Ascending aorta (tissue), 2 donors: ENCODE measurements at regions of chr11 and their contacts with region 1.

Region 1: GRCh38 chr11:62612366-62613290 is at the starts of genes EML3 and ROM1:
- DNase-seq: peak; percentile 81 to 97
- H3K4me3 ChIP-seq: peak within 1 kb of the TSS; percentile 82 to 92
- H3K27ac ChIP-seq: peak within 1 kb of the TSS; percentile 98 to 99
- H3K4me1 ChIP-seq: peaks cover 11 to 27% of the 10 kb centered on the region in 2 donors
- H3K27me3 ChIP-seq: no peaks in the 10 kb centered on the region
- CTCF ChIP-seq: peak; percentile 73 to 95 (median 87)
- total RNA-seq, gene EML3: 207 TPM
- total RNA-seq, gene ROM1: not detected

Region 2: DNA sequence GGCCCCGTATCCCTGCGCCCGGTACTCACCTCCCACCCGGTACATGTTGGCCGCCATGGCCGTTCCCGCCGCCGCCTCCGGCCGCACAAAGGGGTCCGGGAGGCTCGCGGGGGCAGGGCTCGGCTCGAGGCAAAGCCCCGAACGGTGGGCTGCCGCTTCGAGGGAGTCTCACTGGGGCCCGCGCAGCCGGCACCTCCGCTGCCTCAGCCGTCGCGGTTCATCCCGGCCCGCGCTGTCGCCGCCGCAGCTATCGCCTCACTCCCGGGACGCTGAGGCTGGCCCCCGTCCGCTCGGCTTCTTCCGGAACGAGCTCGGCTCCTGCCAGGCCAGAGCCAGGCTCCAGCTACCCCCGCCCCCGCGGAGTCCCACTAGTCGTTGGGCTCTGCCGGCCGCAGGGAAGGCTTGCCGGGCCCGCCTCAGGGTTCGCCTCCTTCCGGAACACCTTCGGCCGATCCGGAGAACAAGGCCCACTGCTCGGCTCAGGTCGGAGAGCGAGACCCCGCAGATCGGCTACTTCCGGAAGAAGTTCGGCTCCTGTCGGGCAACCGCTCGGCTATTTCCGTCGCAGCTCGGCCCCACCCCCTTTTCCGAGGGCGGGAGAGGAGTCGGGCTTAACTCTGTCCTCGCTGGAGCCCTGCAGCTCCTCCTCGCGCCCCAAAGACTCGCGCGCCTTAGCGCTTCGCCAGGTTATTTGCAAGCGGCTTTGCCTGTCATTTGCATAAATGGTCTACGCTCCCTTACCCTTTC is 11.1 kb before region 1 on chr11 and contains the start of gene MTA2:
- intact Hi-C with region 1: loop called (anchors 1 kb)
- DNase-seq: peak; percentile 89 to 98
- H3K4me3 ChIP-seq: peak within 1 kb of the TSS; percentile 87 to 98
- H3K27ac ChIP-seq: peak within 1 kb of the TSS; percentile 96 to 97
- H3K4me1 ChIP-seq: peaks cover 8 to 20% of the 10 kb centered on the region in 2 donors
- H3K27me3 ChIP-seq: no peaks in the 10 kb centered on the region
- CTCF ChIP-seq: no peak
- total RNA-seq, gene MTA2: 79.2 TPM

Region 3: GRCh38 chr11:62652161-62653006 is 39.8 kb after region 1 on chr11:
- intact Hi-C with region 1: loop called (anchors 2 kb)
- DNase-seq: no peak
- H3K4me3 ChIP-seq: peak overlapping the region; percentile 78 to 96
- H3K27ac ChIP-seq: peak overlapping the region; percentile 93 to 94
- H3K4me1 ChIP-seq: peaks cover 0 to 15% of the 10 kb centered on the region in 2 donors
- H3K27me3 ChIP-seq: no peaks in the 10 kb centered on the region
- CTCF ChIP-seq: no peak

Region 4: DNA sequence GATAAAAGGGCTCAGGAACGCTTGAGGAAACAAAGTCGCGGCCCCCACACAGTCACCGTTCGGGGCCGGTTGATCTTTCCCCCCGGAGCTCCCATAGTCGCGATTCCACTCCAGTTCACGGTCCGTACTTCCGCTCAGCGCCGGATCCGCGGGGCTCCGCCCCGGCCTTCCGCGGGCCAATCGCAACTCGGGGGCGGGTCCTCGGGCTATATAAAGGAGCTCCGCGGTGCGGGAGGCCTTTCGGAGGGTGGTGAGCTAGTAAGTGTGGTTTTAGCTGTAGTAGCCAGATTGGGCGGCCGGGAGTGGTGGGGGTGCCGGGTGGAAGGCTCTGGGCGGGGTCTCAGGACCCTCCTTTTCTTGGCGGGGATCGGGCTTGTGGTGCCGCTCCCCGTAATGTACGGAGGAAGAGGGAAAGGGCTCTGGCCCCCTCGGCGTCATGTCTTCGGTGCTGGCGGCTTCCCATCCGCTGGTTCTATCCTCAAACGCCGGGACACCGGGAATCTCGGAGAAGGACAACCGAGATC is 52.5 kb after region 1 on chr11 and contains the starts of genes C11orf98 and CSKMT:
- intact Hi-C with region 1: loop called (anchors 2 kb)
- DNase-seq: peak; percentile 82 to 96
- H3K4me3 ChIP-seq: peak within 1 kb of the TSS; percentile 71 to 93
- H3K27ac ChIP-seq: peak within 1 kb of the TSS; percentile 80 to 89
- H3K4me1 ChIP-seq: peaks cover 10 to 20% of the 10 kb centered on the region in 2 donors
- H3K27me3 ChIP-seq: no peaks in the 10 kb centered on the region
- CTCF ChIP-seq: peak in 1 of 3 experiments; percentile 4
- total RNA-seq, gene C11orf98: 49.8 TPM
- total RNA-seq, gene CSKMT: not detected

Region 5: DNA sequence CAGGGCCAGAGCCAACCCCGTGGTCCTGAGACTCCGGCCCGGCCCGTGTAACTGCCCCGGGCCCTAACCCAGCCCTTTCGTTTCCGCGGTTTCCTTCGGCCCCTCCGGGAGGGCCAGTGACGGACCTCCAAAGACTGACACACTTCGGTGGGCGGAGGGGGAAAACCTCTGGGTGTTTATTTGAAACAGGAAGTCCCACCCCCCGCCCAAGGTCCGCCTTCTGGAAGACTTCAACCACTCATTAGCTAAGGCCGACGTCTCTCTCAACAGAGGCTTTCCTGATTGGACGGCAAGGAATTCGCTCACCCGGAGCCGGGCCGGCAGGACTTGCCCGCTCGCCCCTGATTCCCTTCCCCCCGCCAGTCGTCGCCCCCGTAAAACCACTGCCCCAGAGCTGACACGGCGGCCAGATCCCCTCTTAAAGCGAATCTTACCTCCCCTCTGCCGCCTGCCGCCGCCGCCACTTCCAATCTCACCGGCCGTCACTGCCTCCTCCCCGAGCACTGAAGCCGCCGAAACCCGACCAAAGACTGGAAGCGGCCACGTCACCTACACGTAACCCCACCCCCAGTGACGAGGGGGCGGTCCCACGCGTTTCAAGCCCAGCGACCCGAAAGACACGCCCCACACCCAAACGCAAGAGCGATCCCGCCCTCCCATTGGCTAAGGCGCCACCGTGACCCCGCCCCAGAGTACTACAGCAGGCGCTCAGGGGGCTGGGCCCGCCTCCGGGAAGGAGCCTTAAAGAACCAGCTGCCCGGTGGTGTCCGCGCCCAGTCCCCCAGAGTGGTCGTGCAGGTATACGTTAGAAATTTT is 219.1 kb after region 1 on chr11 and contains the start of gene STX5:
- intact Hi-C with region 1: loop called (anchors 5 kb)
- DNase-seq: peak; percentile 96 to 100
- H3K4me3 ChIP-seq: peak within 1 kb of the TSS; percentile 74 to 77
- H3K27ac ChIP-seq: peak within 1 kb of the TSS; percentile 90 to 95
- H3K4me1 ChIP-seq: peaks cover 0 to 31% of the 10 kb centered on the region in 2 donors
- H3K27me3 ChIP-seq: no peaks in the 10 kb centered on the region
- CTCF ChIP-seq: no peak
- total RNA-seq, gene STX5: 40.3 TPM